PC-3 (cell line): ENCODE measurements at regions of chr1 and their contacts with region 1.

Region 1: DNA sequence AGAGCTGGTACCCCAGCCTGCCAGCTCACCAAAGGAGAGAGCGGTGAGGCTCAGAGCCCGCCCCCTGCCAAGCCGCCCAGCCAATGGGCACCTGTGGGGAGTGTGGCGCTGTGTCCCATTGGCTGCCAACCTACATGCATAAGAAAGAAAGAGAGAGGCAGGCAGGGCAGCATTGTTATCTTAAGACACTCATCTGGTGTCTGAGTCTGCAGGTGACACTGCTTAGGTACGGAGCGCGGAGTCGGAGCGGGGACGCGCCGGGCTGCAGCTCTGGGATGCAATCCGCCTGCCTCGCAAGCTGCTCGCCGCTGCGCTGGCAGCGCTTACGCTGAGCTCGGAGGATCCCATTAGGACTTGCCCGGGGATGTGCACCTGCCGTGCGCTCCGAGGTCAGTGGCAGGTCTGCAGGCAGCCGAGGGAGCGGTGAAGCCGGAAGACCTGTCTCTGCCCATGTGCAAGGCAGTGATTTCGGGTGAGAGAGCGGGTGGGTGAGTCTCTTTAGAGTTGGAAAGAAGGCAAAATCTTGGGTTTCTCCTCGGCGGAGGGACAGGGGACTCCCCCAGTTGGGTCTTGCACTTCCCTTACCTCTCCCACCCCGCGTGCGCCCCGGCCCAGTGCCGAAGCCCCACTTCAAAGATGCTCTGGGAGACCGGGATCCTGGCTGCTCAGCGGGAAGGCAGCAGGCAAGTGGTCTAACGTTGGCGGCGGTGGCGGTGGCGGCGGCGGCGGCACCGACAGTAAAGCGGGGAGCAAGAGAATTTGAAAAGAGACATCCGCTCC is at the start of gene BRINP2:
- DNase-seq: peak; percentile 75
- ATAC-seq: peak; percentile 98
- H3K4me3 ChIP-seq: peak within 1 kb of the TSS; percentile 85
- H3K27ac ChIP-seq: no peak within 1 kb of the TSS
- H3K4me1 ChIP-seq: peaks cover 15% of the 10 kb centered on the region
- H3K27me3 ChIP-seq: no peaks in the 10 kb centered on the region
- CTCF ChIP-seq: no peak
- total RNA-seq, gene BRINP2: 2.6 and 3.7 TPM in 2 replicates

Region 2: GRCh38 chr1:177082855-177083693 is 87.9 kb before region 1 on chr1:
- CTCF ChIA-PET with region 1: no interaction called
- POLR2A ChIA-PET with region 1: interaction called, 3 read pairs
- intact Hi-C with region 1: loop called (anchors 2 kb)
- DNase-seq: peak; percentile 83
- ATAC-seq: peak; percentile 90
- H3K4me3 ChIP-seq: no peak overlapping the region
- H3K27ac ChIP-seq: peak overlapping the region; percentile 84
- H3K4me1 ChIP-seq: peaks cover 29% of the 10 kb centered on the region
- H3K27me3 ChIP-seq: no peaks in the 10 kb centered on the region
- CTCF ChIP-seq: no peak

Region 3: DNA sequence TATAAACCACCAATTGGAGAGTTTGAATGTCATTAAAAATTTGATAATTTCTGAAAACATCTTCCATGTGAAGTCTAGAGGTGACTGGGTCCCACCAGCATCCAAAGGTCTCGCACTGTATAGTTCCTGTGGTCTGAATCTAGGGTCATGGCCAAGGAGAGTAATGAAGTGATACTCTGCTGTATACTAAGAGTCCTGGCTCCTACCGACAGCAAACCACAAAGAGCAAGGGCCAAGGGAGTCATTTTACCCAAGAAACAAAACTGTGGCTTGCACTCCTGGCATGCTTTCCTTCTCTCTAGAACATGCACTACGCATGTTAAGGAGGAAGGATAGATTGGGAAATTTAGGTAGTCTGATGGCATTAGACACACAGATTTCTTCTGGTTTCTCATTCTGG is 115.5 kb after region 1 on chr1:
- CTCF ChIA-PET with region 1: no interaction called
- POLR2A ChIA-PET with region 1: no interaction called
- intact Hi-C with region 1: no loop called
- DNase-seq: no peak
- ATAC-seq: no peak
- H3K4me3 ChIP-seq: no peak overlapping the region
- H3K27ac ChIP-seq: no peak overlapping the region
- H3K4me1 ChIP-seq: peaks cover 4% of the 10 kb centered on the region; the same call in 1 of the 2 replicates
- H3K27me3 ChIP-seq: no peaks in the 10 kb centered on the region
- CTCF ChIP-seq: no peak